ENCODE measurements at regions of chrX and their contacts with region 1.

Region 1: DNA sequence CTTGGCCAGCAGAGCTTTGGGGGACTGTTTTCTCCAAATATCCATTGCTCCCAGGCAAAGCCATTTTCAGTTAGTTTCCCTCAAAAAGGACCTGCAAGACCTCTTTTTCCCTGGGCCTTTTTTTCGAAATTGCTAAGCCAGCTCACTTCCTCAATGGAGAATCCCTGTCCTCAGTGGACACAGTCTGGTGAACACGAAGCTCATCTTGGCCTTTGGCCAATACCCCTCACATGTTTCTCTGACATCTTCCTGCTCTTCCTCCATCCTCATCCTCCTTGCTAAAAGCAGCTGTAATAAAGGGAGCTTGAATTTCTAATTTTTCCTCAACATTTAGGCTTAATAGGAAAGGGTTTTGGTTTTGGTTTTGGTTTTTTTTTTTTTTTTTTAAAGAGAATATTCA is 17.6 kb upstream of the PRPS1 start:
- DNase-seq: no peak
- H3K4me3 ChIP-seq: no peak overlapping the region
- H3K27ac ChIP-seq: no peak overlapping the region
- H3K4me1 ChIP-seq: no peaks in the 10 kb centered on the region
- H3K27me3 ChIP-seq: no peaks in the 10 kb centered on the region
- CTCF ChIP-seq: no peak

Region 2: GRCh38 chrX:106220177-106220576 is 1390.5 kb before region 1 on chrX:
- intact Hi-C with region 1: loop called (anchors 5 kb)
- DNase-seq: no peak
- H3K4me3 ChIP-seq: no peak overlapping the region
- H3K27ac ChIP-seq: no peak overlapping the region
- H3K4me1 ChIP-seq: no peaks in the 10 kb centered on the region
- H3K27me3 ChIP-seq: no peaks in the 10 kb centered on the region
- CTCF ChIP-seq: no peak

Region 3: DNA sequence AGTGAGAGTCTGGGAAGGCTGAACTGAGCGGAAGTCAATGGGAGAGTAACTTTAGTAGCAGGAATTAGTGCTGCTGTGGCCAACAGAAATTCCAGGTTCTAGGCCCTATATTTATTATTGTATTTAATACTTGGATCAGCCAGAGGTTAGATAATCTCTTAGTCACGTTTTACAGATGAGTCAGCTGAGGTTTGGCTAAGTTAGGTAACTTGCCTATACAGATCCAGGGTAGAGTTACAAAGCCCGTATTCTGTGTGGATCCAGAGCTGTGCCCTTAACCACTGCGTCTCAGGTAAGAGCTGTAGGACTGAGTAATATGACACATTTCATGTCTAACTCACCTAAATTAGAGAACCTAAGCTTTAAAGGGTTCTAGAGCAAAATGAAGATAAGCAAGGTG is 460.2 kb after region 1 on chrX:
- intact Hi-C with region 1: loop called (anchors 5 kb)
- DNase-seq: no peak
- H3K4me3 ChIP-seq: no peak overlapping the region
- H3K27ac ChIP-seq: no peak overlapping the region
- H3K4me1 ChIP-seq: no peaks in the 10 kb centered on the region
- H3K27me3 ChIP-seq: no peaks in the 10 kb centered on the region
- CTCF ChIP-seq: no peak

Measured in tibial artery (tissue), 4 donors.